H1 (cell line): ENCODE measurements at regions of chr16 and their contacts with region 1.

Region 1: GRCh38 chr16:77782694-77783093 is 5.7 kb upstream of the VAT1L start:
- DNase-seq: no peak
- H3K4me3 ChIP-seq: no peak overlapping the region
- H3K27ac ChIP-seq: no peak overlapping the region
- H3K4me1 ChIP-seq: no peaks in the 10 kb centered on the region; a peak in 1 of 7 replicates
- H3K27me3 ChIP-seq: peaks cover 0 to 8% (median 8%) of the 10 kb centered on the region in 4 experiments; a peak in 4 of 7 replicates
- CTCF ChIP-seq: peak in 2 of 3 experiments; percentile 49 to 60; a peak in 3 of 4 replicates
- EP300 ChIP-seq: no peak
- POLR2A ChIP-seq: no peak
- RAD21 ChIP-seq: peak; percentile 48 to 58

Region 2: DNA sequence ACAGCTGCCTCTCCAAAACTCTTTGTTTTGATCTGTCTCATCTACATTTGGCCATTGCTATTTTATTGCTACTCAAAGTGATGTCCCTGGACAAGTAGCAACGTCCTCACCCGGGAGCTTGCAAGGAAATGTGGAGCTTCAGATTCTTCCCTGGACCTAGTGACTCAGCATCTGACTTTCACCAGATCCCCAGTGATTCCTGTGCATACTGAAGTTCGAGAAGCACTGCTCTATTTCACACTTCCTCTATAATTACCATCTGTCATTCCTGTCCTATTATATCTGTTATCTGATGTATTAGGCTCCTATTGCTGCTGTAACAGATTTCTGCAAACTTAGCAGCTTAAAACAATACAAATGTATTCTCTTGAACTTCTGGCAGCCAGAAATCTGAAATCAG is 22.9 kb before region 1 on chr16:
- CTCF ChIA-PET with region 1: interaction called, 11 read pairs
- POLR2A ChIA-PET with region 1: no interaction called
- DNase-seq: no peak
- H3K4me3 ChIP-seq: no peak overlapping the region
- H3K27ac ChIP-seq: no peak overlapping the region
- H3K4me1 ChIP-seq: no peaks in the 10 kb centered on the region
- H3K27me3 ChIP-seq: peaks cover 0 to 2% (median 0%) of the 10 kb centered on the region in 4 experiments; a peak in 1 of 7 replicates
- CTCF ChIP-seq: no peak
- EP300 ChIP-seq: no peak
- POLR2A ChIP-seq: no peak
- RAD21 ChIP-seq: no peak

Region 3: DNA sequence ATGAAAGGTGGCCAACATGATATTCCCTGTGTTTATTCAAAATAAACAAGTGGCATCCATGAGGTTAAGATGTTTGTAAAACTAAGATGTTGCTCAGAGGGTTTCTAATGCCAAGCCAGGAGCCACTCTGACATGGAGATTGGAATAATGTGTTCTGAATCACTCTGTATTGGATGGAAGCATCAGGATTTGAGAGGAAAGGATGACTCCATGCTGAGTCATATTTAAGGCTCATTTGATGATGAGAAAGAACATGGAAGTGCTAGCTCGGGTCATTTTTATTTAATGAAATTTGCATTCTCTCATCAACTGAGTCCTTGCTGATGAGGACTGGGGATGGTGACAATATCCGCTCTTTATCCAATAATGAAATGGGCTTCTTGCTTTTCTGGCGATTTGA is 11.9 kb after region 1 on chr16:
- CTCF ChIA-PET with region 1: interaction called, 15 read pairs
- POLR2A ChIA-PET with region 1: interaction called, 3 read pairs
- DNase-seq: no peak
- H3K4me3 ChIP-seq: no peak overlapping the region
- H3K27ac ChIP-seq: no peak overlapping the region
- H3K4me1 ChIP-seq: no peaks in the 10 kb centered on the region; a peak in 4 of 7 replicates
- H3K27me3 ChIP-seq: peaks cover 0 to 3% (median under 1%) of the 10 kb centered on the region in 4 experiments; a peak in 4 of 7 replicates
- CTCF ChIP-seq: no peak
- EP300 ChIP-seq: no peak
- POLR2A ChIP-seq: no peak
- RAD21 ChIP-seq: no peak